Left lung (tissue), 14 donors: ENCODE measurements at regions of chr10 and their contacts with region 1.

Region 1: GRCh38 chr10:6401562-6402348 is 178.3 kb downstream of the PRKCQ start:
- DNase-seq: peak in 3 of 4 donors; percentile 82 to 92 (median 83)
- ATAC-seq: peak; percentile 97
- H3K4me3 ChIP-seq: peak overlapping the region; percentile 2 to 33
- H3K27ac ChIP-seq: peak overlapping the region in 1 of 2 donors; percentile 88
- H3K4me1 ChIP-seq: peaks cover 8 to 52% of the 10 kb centered on the region in 2 donors
- H3K27me3 ChIP-seq: no peaks in the 10 kb centered on the region
- CTCF ChIP-seq: peak; percentile 45 to 80

Region 2: GRCh38 chr10:6108603-6109443 is 292.9 kb before region 1 on chr10:
- intact Hi-C with region 1: loop called in 1 of 2 experiments (anchors 2 kb)
- DNase-seq: no peak
- ATAC-seq: peak; percentile 85
- H3K4me3 ChIP-seq: no peak overlapping the region
- H3K27ac ChIP-seq: peak overlapping the region in 1 of 2 donors; percentile 13
- H3K4me1 ChIP-seq: peaks cover 0 to 12% of the 10 kb centered on the region in 2 donors
- H3K27me3 ChIP-seq: no peaks in the 10 kb centered on the region
- CTCF ChIP-seq: peak; percentile 60 to 72

Region 3: DNA sequence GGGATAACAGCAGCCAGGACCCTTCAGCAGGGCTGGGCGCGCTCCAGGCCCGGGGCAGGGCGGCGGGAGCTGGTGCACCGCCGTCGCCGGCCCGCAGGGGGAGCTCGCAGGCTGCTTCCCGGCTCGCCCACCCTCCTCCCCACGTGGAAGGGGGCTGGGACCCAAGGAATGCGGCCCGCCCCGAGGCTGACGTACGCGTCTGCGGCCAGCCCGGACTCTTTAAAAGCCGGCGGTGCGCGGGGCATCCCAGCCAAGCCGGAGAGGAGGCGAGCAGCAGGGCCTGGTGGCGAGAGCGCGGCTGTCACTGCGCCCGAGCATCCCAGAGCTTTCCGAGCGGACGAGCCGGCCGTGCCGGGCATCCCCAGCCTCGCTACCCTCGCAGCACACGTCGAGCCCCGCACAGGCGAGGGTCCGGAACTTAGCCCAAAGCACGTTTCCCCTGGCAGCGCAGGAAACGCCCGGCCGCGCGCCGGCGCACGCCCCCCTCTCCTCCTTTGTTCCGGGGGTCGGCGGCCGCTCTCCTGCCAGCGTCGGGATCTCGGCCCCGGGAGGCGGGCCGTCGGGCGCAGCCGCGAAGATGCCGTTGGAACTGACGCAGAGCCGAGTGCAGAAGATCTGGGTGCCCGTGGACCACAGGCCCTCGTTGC is 198.9 kb before region 1 on chr10 and contains the start of gene PFKFB3:
- intact Hi-C with region 1: loop called in 1 of 2 experiments (anchors 5 kb)
- DNase-seq: peak; percentile 93 to 100 (median 96)
- ATAC-seq: peak; percentile 89
- H3K4me3 ChIP-seq: peak within 1 kb of the TSS; percentile 66 to 94
- H3K27ac ChIP-seq: peak within 1 kb of the TSS; percentile 91 to 96
- H3K4me1 ChIP-seq: peaks cover 14 to 63% of the 10 kb centered on the region in 2 donors
- H3K27me3 ChIP-seq: no peaks in the 10 kb centered on the region
- CTCF ChIP-seq: peak; percentile 97 to 99
- polyA plus RNA-seq, gene PFKFB3: 15.3 to 24.5 (median 21.8) TPM